ENCODE measurements at regions of chr2 and their contacts with region 1.

Region 1: DNA sequence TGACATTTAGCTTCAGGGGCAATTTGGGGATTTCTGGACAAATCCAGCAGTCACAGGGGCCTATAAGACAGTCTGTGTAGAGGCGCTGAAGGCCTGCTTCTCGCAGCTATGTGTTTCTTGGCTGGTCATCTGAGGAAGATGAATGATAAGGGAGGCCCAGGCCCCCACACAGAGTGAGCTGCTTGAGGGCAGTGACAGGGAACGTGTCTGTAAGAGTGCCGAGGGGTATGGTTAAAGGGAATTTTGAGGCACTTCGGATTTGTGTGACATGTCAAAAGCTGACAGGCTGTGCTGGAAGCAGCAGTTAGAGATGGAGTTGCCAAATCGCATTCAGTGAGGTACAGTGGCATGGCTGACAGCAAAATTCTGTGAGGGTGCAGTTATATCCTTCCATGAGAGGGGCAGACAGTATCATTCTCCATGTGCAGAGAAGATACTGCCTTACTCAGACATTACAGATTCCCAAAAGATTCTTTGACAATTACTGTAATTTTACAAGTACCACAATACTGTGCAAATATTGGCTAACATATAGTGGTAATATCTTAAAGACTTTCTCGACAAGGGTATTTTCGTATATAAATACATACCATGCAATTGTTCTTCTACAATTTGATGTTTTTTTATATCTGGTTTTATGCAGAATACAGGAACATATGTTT is 74.0 kb downstream of the CERS6 start:
- DNase-seq: no peak
- H3K4me3 ChIP-seq: no peak overlapping the region
- H3K27ac ChIP-seq: no peak overlapping the region
- H3K4me1 ChIP-seq: peaks cover 0 to 58% (median 19%) of the 10 kb centered on the region in 4 donors
- H3K27me3 ChIP-seq: no peaks in the 10 kb centered on the region
- CTCF ChIP-seq: no peak
- EP300 ChIP-seq: no peak
- POLR2A ChIP-seq: no peak

Region 2: DNA sequence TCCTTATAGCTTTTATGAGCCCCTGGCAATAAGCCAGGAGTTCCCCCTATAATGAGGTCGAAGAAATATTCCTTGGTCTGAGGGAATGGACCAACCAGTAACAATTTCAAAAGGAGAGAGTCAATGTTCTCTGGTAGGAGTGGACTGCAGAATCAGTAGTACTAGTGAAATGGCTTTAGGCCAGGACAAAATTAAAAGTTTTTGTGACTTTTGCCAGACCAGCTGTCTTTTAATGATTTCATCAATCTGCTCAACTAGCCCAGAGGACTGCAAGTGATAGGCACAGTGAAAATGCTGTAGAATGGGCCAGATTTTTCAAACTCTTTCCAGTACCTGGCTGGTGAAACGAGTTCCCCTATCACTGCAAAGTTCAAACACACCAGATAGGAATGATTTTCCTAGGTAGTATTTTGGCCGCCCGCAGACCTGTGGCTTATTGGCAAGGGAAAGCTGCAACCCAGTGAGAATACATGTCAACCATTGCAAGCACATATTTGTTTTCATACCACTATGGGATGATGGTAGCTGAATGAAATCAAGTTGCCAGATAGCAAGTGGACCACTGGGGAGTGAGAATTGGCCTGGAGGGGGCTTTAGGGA is 28.5 kb before region 1 on chr2:
- in situ Hi-C with region 1: no loop called
- intact Hi-C with region 1: loop called (anchors 2 kb)
- DNase-seq: no peak
- H3K4me3 ChIP-seq: no peak overlapping the region
- H3K27ac ChIP-seq: no peak overlapping the region
- H3K4me1 ChIP-seq: peaks cover 0 to 10% (median 1%) of the 10 kb centered on the region in 4 donors
- H3K27me3 ChIP-seq: no peaks in the 10 kb centered on the region
- CTCF ChIP-seq: no peak
- EP300 ChIP-seq: no peak
- POLR2A ChIP-seq: no peak

Region 3: DNA sequence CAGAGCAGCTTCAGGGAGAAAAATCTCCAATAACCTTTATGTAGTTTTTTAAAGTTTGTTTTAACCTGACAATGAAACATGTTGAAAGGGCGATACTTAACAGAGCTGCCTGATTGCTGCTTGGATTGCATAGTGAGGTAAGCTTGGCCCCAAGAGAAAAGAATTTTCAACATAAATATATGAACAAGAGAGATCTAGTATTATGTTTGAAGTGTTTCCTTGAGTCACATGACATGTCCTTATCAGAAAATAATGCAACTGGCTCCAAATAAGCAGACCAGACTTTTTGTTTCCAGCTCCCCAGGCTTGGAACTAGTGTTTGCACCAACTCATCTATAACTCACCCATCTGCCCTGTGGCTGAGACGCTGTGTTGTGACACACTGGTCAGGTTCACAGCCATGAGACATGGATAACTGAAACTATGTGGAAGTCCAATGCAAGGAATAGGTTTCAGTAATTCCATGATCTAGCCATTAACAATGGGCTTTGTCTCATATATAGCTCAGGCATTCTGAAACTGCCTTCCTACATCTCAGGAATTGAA is 456.4 kb after region 1 on chr2:
- in situ Hi-C with region 1: no loop called
- intact Hi-C with region 1: no loop called
- DNase-seq: no peak
- H3K4me3 ChIP-seq: no peak overlapping the region
- H3K27ac ChIP-seq: no peak overlapping the region
- H3K4me1 ChIP-seq: no peaks in the 10 kb centered on the region
- H3K27me3 ChIP-seq: no peaks in the 10 kb centered on the region
- CTCF ChIP-seq: no peak
- EP300 ChIP-seq: no peak
- POLR2A ChIP-seq: no peak

Measured in transverse colon (tissue), 4 donors.